ENCODE measurements at regions of chr9 and their contacts with region 1.

Region 1: GRCh38 chr9:20566392-20566791 is 55.9 kb downstream of the MLLT3 start:
- DNase-seq: no peak
- ATAC-seq: no peak
- H3K4me3 ChIP-seq: no peak overlapping the region
- H3K4me3 Mint-ChIP-seq: no peak overlapping the region
- H3K27ac ChIP-seq: no peak overlapping the region
- H3K27ac Mint-ChIP-seq: no peak overlapping the region
- H3K4me1 ChIP-seq: peaks cover 3 to 14% of the 10 kb centered on the region in 2 experiments
- H3K4me1 Mint-ChIP-seq: peaks cover 87 to 93% (median 89%) of the 10 kb centered on the region in 3 donors
- H3K27me3 ChIP-seq: no peaks in the 10 kb centered on the region
- H3K27me3 Mint-ChIP-seq: no peaks in the 10 kb centered on the region

Region 2: DNA sequence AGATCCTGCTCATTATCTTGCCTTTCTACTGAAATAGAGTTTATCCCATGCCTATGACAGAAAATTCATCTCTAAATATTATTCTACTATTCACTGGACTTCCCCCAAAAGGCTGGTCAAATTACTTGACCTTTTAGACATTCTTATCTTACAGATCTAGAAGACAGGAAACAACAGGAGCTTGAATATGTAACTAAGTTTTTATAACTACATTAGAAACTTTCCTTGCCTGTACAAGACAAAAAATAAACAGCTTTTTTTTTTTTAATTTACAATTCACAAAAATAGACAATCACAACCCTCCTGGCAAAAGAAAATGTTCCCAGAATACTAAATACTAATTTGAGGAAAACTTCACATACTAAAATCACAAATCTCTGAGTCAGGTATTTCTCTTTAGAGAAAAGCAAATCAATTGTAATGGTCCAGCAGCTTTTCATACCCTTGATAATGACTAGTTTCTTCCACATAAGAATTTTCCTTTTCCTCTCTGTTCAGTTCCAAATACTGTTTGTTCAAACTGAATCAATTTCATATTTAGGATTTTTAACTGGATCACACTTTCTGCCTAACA is 12.7 kb before region 1 on chr9:
- CTCF ChIA-PET with region 1: no interaction called
- POLR2A ChIA-PET with region 1: interaction called in 1 of 2 experiments, 13 read pairs
- DNase-seq: no peak
- ATAC-seq: no peak
- H3K4me3 ChIP-seq: no peak overlapping the region
- H3K4me3 Mint-ChIP-seq: peak overlapping the region; percentile 32 to 40 (median 37)
- H3K27ac ChIP-seq: no peak overlapping the region
- H3K27ac Mint-ChIP-seq: peak overlapping the region; percentile 67 to 69
- H3K4me1 ChIP-seq: peaks cover 17 to 52% of the 10 kb centered on the region in 2 experiments
- H3K4me1 Mint-ChIP-seq: peaks cover 84 to 87% (median 85%) of the 10 kb centered on the region in 3 donors
- H3K27me3 ChIP-seq: no peaks in the 10 kb centered on the region
- H3K27me3 Mint-ChIP-seq: no peaks in the 10 kb centered on the region

Measured in T-cell (primary cell).